ENCODE measurements at regions of chr16 and their contacts with region 1.

Region 1: DNA sequence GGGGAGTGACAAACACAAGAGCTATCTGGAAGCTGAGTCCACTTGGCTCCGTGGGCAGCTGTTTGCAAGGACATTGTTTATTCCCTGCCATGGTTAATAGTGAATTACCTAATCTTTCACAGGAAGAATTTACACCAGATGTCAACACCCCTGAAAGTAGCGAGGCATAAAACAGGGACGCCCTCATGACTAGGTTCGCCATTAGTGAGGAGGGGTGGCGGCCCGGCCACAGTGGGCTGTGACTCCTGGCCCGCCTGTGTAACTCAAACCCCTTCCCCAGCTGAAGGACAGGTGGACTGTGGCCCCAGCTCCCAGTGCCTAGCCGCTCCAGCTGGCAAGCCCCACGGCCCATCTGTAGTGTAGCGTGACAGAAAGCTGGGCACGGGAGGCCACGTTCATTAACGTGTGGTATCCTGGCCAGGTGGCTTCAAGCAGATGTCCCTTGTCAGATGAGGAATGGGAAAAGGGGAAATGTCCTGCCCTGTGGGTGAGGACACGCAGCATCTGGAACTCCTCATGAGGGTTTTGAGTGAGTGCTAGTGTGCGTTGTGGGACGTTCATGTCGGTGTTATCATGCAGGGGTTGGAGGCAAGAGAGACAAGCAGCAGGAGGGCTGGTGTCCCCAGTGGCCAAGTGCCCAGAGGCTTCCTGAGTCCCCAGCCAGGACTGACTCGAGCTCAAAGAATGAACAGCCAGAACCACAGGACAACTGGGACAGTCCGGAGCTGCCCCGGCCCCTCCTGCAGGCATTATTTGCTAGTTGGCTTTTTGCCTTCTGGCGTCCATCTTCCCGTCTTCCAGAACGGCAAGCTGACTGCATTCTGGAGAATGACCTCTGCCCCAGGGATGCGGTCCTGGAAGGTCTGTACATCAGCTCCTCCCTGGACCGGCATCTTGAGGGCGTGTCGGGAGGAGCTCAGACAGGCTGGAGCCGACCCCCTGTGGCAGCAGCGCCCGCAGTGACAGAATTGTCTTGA is 19.2 kb downstream of the KDM8 start:
- DNase-seq: peak in 2 of 3 donors; percentile 78 to 80
- ATAC-seq: peak; percentile 55 to 65 (median 60)
- H3K4me3 ChIP-seq: peak overlapping the region in 1 of 3 donors; percentile 5
- H3K27ac ChIP-seq: peak overlapping the region; percentile 43 to 75 (median 49)
- H3K4me1 ChIP-seq: peaks cover 0 to 30% (median 15%) of the 10 kb centered on the region in 4 donors
- H3K27me3 ChIP-seq: no peaks in the 10 kb centered on the region
- CTCF ChIP-seq: no peak
- POLR2A ChIP-seq: peak; percentile 3

Region 2: DNA sequence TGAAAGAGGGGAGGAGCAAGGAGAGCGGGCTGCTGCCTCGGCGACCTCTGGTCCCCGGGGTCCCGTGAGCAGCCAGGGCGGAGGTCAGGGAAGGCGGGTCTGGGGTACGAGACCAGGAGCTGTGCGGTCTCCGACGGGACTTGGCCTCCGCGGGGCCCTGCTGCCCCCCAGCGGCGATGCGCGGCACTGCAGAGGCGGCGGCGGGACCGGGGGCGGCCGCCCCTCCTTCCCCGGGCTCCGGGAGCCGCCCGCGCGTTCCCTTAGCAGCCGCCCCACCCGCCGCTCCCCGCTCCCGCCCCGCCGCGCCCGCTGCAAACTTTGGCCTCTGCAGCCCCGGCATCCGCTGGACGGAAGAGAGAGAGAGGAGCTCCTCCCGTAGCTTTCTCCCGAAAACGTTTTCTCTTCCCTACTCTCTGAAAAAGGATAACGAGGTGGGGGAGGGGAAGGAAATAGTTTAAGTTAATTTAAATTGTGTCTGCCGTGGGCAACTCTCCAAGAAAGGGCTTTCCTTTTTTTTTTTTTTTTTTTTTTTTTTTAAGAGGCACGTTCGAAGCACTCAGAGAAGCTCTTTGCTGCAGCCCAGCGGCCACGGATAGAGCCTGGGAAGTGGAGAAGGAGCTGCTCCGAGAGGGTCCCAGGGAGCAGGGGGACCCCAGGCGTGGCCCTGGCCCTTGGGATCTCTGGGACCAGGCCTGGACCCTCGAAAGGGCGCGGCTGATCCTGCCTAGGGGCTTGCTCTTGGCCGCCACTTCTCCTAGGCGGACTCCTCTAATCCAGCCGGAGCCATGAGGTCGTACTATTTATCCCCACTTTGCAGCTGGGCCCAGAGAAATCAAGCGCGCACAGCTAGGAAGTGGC is 112.6 kb before region 1 on chr16:
- intact Hi-C with region 1: no loop called
- DNase-seq: peak; percentile 66 to 82 (median 75)
- ATAC-seq: peak; percentile 83 to 94 (median 90)
- H3K4me3 ChIP-seq: no peak overlapping the region
- H3K27ac ChIP-seq: no peak overlapping the region
- H3K4me1 ChIP-seq: peaks cover 0 to 6% (median 0%) of the 10 kb centered on the region in 4 donors
- H3K27me3 ChIP-seq: no peaks in the 10 kb centered on the region
- CTCF ChIP-seq: peak; percentile 63 to 97 (median 94)
- POLR2A ChIP-seq: no peak

Region 3: DNA sequence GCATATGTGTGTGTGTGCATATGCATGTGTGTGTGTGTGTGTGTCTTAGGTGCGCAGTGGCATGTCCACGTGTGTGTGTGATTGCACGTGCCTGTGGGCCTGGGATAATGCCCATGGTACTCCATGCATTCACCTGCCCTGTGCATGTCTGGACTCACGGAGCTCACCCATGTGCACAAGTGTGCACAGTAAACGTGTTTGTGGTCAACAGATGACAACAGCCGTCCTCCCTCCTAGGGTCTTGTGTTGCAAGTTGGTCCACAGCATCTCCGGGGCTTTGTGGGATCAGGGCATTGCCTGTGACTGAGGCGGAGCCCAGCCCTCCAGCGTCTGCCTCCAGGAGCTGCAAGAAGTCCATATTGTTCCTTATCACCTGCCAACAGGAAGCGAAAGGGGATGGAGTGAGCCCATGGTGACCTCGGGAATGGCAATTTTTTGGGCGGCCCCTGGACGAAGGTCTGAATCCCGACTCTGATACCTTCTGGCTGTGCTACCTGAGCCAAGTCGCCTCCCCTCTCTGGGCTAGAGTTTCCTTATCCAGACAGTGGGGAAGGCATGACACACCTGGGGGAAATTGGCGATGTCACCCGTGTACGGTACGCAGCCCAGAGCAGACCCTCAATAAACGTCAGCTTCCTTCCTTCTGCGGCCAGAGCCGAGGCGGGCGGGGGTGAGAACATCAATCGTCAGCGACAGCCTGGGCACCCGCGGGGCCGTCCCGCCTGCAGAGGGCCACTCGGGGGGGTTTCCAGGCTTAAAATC is 227.1 kb after region 1 on chr16:
- intact Hi-C with region 1: loop called in 1 of 2 experiments (anchors 10 kb)
- DNase-seq: peak in 1 of 3 donors; percentile 43
- ATAC-seq: peak; percentile 33 to 59 (median 54)
- H3K4me3 ChIP-seq: no peak overlapping the region
- H3K27ac ChIP-seq: no peak overlapping the region
- H3K4me1 ChIP-seq: no peaks in the 10 kb centered on the region
- H3K27me3 ChIP-seq: no peaks in the 10 kb centered on the region
- CTCF ChIP-seq: no peak
- POLR2A ChIP-seq: no peak